A673 (cell line): ENCODE measurements at regions of chr1 and their contacts with region 1.

Region 1: GRCh38 chr1:235872270-235872669 is 5.6 kb upstream of the LYST start:
- DNase-seq: no peak
- H3K4me3 ChIP-seq: no peak overlapping the region
- H3K27ac ChIP-seq: no peak overlapping the region
- H3K4me1 ChIP-seq: no peaks in the 10 kb centered on the region
- H3K27me3 ChIP-seq: no peaks in the 10 kb centered on the region
- CTCF ChIP-seq: no peak

Region 2: GRCh38 chr1:235838021-235838420 is 34.2 kb before region 1 on chr1:
- CTCF ChIA-PET with region 1: no interaction called
- POLR2A ChIA-PET with region 1: interaction called, 12 read pairs
- intact Hi-C with region 1: no loop called
- DNase-seq: no peak
- H3K4me3 ChIP-seq: no peak overlapping the region
- H3K27ac ChIP-seq: no peak overlapping the region
- H3K4me1 ChIP-seq: no peaks in the 10 kb centered on the region
- H3K27me3 ChIP-seq: no peaks in the 10 kb centered on the region
- CTCF ChIP-seq: no peak